ENCODE measurements at regions of chr9 and their contacts with region 1.

Region 1: DNA sequence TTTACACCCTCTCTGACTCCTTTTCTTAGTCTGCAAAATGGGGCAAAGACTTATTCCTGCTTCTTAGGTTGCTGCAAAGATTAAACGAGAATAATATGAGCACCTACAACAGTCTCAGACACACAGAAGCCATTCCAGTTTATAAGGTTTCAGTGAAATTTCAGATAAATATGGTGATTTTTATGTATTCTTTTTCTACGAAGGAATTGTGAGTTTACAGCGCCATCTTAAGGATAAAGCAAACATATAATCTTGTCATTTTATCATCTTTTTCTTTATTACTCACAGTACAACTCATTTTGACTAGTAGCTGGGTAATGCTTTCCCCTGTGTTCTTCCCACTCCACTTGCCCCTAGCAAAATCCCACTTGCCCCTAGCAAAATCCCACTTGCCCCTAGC is 29.2 kb upstream of the SMC5 start:
- DNase-seq: no peak
- ATAC-seq: peak in 2 of 4 donors; percentile 20 to 66
- H3K4me3 ChIP-seq: peak overlapping the region in 3 of 12 donors; percentile 1 to 36 (median 23)
- H3K27ac ChIP-seq: peak overlapping the region in 6 of 12 donors; percentile 6 to 43 (median 18)
- H3K4me1 ChIP-seq: peaks cover 0 to 17% (median 9%) of the 10 kb centered on the region in 12 donors
- H3K27me3 ChIP-seq: no peaks in the 10 kb centered on the region
- CTCF ChIP-seq: peak in 9 of 12 donors; percentile 16 to 55 (median 35)
- POLR2A ChIP-seq: no peak

Region 2: DNA sequence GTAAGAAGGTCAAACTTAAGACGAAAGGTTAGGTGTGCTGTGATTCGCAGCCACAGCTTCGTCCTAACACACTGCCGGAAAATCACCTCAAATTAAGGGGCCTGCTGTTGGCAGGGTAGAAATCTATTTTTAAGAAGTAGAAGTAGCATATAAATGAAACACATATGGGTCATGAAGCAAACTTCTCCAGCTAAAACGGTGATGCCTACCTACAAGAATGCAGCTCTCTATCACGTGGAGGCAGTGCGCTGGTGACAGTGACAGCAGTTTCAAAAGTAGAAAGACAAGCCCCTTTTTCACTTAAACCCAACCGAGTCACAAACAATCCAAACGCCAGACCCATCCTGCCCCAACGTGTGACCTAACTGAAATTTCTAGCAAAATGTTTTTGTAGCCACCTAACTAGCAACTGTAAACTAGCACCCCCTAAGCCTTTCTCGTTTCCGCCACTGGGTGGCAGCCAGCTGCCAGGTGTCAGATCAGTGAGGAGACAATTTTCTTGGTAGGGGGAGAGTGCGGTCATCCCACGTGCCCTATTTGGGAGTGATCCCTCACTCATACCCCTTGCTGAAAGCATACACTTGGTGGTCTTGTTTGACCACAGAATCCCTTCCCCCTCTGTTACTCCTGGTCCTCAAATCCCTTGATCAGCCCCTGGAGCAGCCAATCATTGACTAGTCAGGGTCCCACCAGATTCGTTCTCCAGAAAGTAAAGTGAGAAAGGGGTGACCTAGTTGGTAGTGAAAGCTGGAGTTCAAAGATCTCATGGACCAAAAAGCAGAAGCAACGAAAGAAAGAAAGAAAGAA is 257.7 kb before region 1 on chr9:
- intact Hi-C with region 1: loop called in 7 of 10 experiments (anchors 2 to 10 kb)
- DNase-seq: peak; percentile 54 to 82 (median 71)
- ATAC-seq: peak; percentile 50 to 86 (median 76)
- H3K4me3 ChIP-seq: no peak overlapping the region
- H3K27ac ChIP-seq: no peak overlapping the region
- H3K4me1 ChIP-seq: peaks cover 0 to 10% (median 4%) of the 10 kb centered on the region in 12 donors
- H3K27me3 ChIP-seq: no peaks in the 10 kb centered on the region
- CTCF ChIP-seq: peak; percentile 67 to 94 (median 84)
- POLR2A ChIP-seq: no peak

Region 3: DNA sequence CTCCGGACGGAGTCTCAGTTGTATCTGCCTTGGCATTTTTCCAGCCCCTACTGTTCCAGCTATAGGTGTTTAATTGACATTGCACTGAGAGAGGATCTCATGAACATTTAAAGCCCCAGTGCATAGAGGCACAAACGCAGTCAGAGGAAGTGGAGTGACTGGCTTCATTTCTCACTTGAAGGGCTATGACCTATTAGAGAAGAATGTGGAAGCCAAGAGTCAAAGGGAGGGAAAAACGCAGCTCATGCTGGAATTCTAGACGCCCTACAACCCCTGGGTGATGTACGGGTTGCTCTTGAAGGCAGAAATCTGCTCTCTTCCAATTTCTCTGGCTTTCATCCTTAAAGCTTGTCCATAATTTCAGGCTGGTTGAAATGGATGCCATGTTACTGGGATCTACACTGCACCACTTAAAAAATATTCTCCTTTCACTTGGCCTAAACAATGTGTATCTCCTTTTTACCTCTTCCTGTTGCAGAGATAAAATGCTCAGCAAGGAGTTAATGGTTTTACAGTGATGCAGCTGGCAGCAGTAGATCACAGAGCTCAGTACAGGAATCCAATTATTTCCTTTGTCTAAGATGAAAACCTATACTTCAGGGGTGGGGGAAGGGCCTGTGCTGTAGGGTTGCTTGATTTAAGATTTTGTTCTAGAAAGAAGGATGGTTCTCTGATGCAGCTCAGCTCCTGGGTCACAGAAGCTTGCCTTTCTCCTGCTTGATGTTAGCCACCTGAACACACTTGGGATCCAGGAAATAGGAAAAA is 247.7 kb before region 1 on chr9:
- intact Hi-C with region 1: loop called in 3 of 10 experiments (anchors 10 kb)
- DNase-seq: no peak
- ATAC-seq: no peak
- H3K4me3 ChIP-seq: no peak overlapping the region
- H3K27ac ChIP-seq: no peak overlapping the region
- H3K4me1 ChIP-seq: no peaks in the 10 kb centered on the region
- H3K27me3 ChIP-seq: no peaks in the 10 kb centered on the region
- CTCF ChIP-seq: no peak
- POLR2A ChIP-seq: no peak

Region 4: GRCh38 chr9:70111042-70111602 is 118.5 kb before region 1 on chr9:
- intact Hi-C with region 1: loop called in 2 of 10 experiments (anchors 5 to 10 kb)
- DNase-seq: peak; percentile 76 to 88 (median 79)
- ATAC-seq: peak; percentile 47 to 87 (median 84)
- H3K4me3 ChIP-seq: no peak overlapping the region
- H3K27ac ChIP-seq: peak overlapping the region in 8 of 12 donors; percentile 7 to 61 (median 19)
- H3K4me1 ChIP-seq: peaks cover 0 to 17% (median 3%) of the 10 kb centered on the region in 12 donors
- H3K27me3 ChIP-seq: no peaks in the 10 kb centered on the region
- CTCF ChIP-seq: peak; percentile 70 to 95 (median 84)
- POLR2A ChIP-seq: no peak

Region 5: DNA sequence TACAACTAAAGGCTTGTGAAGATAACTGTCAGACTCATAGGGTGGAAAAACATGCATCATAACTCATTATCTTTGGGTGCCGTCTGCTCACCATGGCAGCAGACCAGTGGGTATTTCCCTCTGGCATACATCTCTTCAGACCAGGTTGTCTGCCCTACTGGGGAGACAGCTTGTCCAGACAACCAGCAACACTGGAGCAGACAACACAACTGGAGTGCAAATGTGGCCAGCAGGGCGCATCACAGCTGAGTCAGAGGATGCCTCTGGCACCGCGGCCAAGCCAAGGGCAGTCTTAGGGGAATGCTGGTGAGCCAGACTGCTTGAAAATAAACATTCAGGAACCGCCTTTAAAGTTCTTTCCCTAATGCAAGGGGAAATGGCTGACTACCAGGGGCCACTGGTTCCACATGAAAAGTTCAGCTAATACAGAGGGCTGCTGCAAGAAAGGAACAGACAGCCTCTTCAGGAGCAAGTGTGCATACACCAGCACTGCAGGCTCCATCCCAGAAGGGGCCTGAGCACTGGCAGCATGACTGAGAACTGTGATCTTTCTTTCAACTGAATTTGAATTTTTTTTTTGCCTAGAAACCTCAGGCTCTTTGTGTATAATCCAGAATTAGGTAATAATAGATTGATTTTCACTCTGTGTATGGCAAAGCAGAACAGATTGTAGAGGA is 108.6 kb before region 1 on chr9:
- intact Hi-C with region 1: loop called in 2 of 10 experiments (anchors 10 kb)
- DNase-seq: peak in 4 of 5 donors; percentile 28 to 84 (median 78)
- ATAC-seq: peak; percentile 80 to 94 (median 88)
- H3K4me3 ChIP-seq: no peak overlapping the region
- H3K27ac ChIP-seq: peak overlapping the region in 5 of 12 donors; percentile 19 to 56 (median 31)
- H3K4me1 ChIP-seq: peaks cover 0 to 9% (median 0%) of the 10 kb centered on the region in 12 donors
- H3K27me3 ChIP-seq: no peaks in the 10 kb centered on the region
- CTCF ChIP-seq: peak in 5 of 12 donors; percentile 11 to 35 (median 26)
- POLR2A ChIP-seq: no peak

Region 6: GRCh38 chr9:70136632-70137031 is 92.9 kb before region 1 on chr9:
- intact Hi-C with region 1: loop called in 1 of 10 experiments (anchors 10 kb)
- DNase-seq: no peak
- ATAC-seq: peak in 1 of 4 donors; percentile 22
- H3K4me3 ChIP-seq: no peak overlapping the region
- H3K27ac ChIP-seq: no peak overlapping the region
- H3K4me1 ChIP-seq: peaks cover 0 to 6% (median 0%) of the 10 kb centered on the region in 12 donors
- H3K27me3 ChIP-seq: no peaks in the 10 kb centered on the region
- CTCF ChIP-seq: no peak
- POLR2A ChIP-seq: no peak

Region 7: GRCh38 chr9:70340572-70340971 is 111.0 kb after region 1 on chr9:
- intact Hi-C with region 1: no loop called
- DNase-seq: no peak
- ATAC-seq: no peak
- H3K4me3 ChIP-seq: no peak overlapping the region
- H3K27ac ChIP-seq: no peak overlapping the region
- H3K4me1 ChIP-seq: peaks cover 0 to 3% (median 0%) of the 10 kb centered on the region in 12 donors
- H3K27me3 ChIP-seq: no peaks in the 10 kb centered on the region
- CTCF ChIP-seq: peak; percentile 40 to 70 (median 60)
- POLR2A ChIP-seq: no peak

Measured in heart left ventricle (tissue), 16 donors.